ENCODE measurements at regions of chr17 and their contacts with region 1.

Region 1: DNA sequence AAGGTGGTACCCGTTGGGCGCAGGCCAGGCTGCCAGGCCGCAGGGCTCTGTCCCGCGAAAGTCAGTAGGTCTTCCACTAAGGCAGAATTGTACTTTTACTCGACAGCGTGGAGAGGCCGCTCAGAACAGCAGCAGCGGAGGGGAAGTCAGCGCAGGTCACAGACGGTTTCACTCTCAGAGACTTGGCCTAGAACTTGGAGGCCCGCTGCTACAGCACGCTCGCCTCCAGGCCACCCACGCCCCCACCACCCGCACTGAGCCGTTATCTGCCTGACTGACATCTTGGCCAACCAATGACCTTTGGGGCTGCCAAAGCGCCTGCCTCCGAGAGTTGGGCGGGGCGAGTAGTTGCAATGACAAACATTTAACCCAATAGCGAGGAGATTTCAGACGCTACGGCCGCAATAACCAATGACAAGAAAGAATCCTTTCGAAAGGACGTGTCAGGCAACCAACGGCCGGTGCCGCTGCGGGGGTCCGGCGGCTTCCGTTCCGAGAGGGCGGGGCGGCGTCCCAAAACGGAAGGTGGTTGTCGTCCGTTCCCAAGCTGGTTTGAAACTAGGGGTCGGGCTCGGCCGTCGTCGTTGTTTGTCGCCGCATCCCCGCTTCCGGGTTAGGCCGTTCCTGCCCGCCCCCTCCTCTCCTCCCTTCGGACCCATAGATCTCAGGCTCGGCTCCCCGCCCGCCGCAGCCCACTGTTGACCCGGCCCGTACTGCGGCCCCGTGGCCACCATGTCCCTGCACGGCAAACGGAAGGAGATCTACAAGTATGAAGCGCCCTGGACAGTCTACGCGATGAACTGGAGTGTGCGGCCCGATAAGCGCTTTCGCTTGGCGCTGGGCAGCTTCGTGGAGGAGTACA is at the start of gene DCAF7:
- DNase-seq: peak; percentile 93 to 99 (median 99)
- ATAC-seq: peak; percentile 97
- H3K4me3 ChIP-seq: peak within 1 kb of the TSS; percentile 93
- H3K4me3 Mint-ChIP-seq: peak within 1 kb of the TSS; percentile 85 to 99 (median 98)
- H3K27ac ChIP-seq: peak within 1 kb of the TSS; percentile 90
- H3K27ac Mint-ChIP-seq: peak within 1 kb of the TSS; percentile 94 to 97 (median 96)
- H3K4me1 ChIP-seq: peaks cover 18 to 27% of the 10 kb centered on the region in 2 donors
- H3K4me1 Mint-ChIP-seq: peaks cover 32 to 50% (median 41%) of the 10 kb centered on the region in 7 donors
- H3K27me3 ChIP-seq: no peaks in the 10 kb centered on the region
- H3K27me3 Mint-ChIP-seq: peaks cover 0 to 2% (median 0%) of the 10 kb centered on the region in 5 donors
- total RNA-seq, gene DCAF7: 26.0 to 128 (median 70.0) TPM

Region 2: GRCh38 chr17:63445979-63446691 is 104.0 kb before region 1 on chr17 and contains the start of gene CYB561:
- CTCF ChIA-PET with region 1: no interaction called
- POLR2A ChIA-PET with region 1: no interaction called
- intact Hi-C with region 1: loop called (anchors 1 to 5 kb)
- DNase-seq: peak; percentile 34 to 83 (median 54)
- ATAC-seq: peak; percentile 74
- H3K4me3 ChIP-seq: peak within 1 kb of the TSS; percentile 61
- H3K4me3 Mint-ChIP-seq: peak within 1 kb of the TSS; percentile 69 to 87 (median 79)
- H3K27ac ChIP-seq: peak within 1 kb of the TSS; percentile 67
- H3K27ac Mint-ChIP-seq: peak within 1 kb of the TSS; percentile 33 to 86 (median 72)
- H3K4me1 ChIP-seq: peaks cover 9 to 11% of the 10 kb centered on the region in 2 donors
- H3K4me1 Mint-ChIP-seq: peaks cover 11 to 37% (median 23%) of the 10 kb centered on the region in 7 donors
- H3K27me3 ChIP-seq: no peaks in the 10 kb centered on the region
- H3K27me3 Mint-ChIP-seq: peaks cover 0 to 24% (median 0%) of the 10 kb centered on the region in 5 donors
- total RNA-seq, gene CYB561: 5.0 to 20.4 (median 11.0) TPM

Region 3: GRCh38 chr17:63611354-63611753 is 61.2 kb after region 1 on chr17:
- CTCF ChIA-PET with region 1: interaction called, 4 read pairs
- POLR2A ChIA-PET with region 1: interaction called, 5 read pairs
- intact Hi-C with region 1: loop called in 1 of 2 experiments (anchors 2 kb)
- DNase-seq: peak in 5 of 9 donors; percentile 3 to 57 (median 25)
- ATAC-seq: peak; percentile 47
- H3K4me3 ChIP-seq: no peak overlapping the region
- H3K4me3 Mint-ChIP-seq: peak overlapping the region in 9 of 10 donors; percentile 10 to 74 (median 58)
- H3K27ac ChIP-seq: peak overlapping the region; percentile 52
- H3K27ac Mint-ChIP-seq: peak overlapping the region; percentile 85 to 98 (median 93)
- H3K4me1 ChIP-seq: peaks cover 25 to 28% of the 10 kb centered on the region in 2 donors
- H3K4me1 Mint-ChIP-seq: peaks cover 22 to 30% (median 29%) of the 10 kb centered on the region in 7 donors
- H3K27me3 ChIP-seq: no peaks in the 10 kb centered on the region
- H3K27me3 Mint-ChIP-seq: no peaks in the 10 kb centered on the region

Region 4: GRCh38 chr17:63773381-63774140 is 223.4 kb after region 1 on chr17 and contains the start of gene CCDC47:
- CTCF ChIA-PET with region 1: no interaction called
- POLR2A ChIA-PET with region 1: interaction called, 3 read pairs
- intact Hi-C with region 1: loop called in 1 of 2 experiments (anchors 1 kb)
- DNase-seq: peak; percentile 92 to 99 (median 99)
- ATAC-seq: peak; percentile 88
- H3K4me3 ChIP-seq: peak within 1 kb of the TSS; percentile 85
- H3K4me3 Mint-ChIP-seq: peak within 1 kb of the TSS; percentile 91 to 99 (median 98)
- H3K27ac ChIP-seq: peak within 1 kb of the TSS; percentile 100
- H3K27ac Mint-ChIP-seq: peak within 1 kb of the TSS; percentile 97 to 100 (median 99)
- H3K4me1 ChIP-seq: peaks cover 21 to 46% of the 10 kb centered on the region in 2 donors
- H3K4me1 Mint-ChIP-seq: peaks cover 31 to 84% (median 62%) of the 10 kb centered on the region in 7 donors
- H3K27me3 ChIP-seq: no peaks in the 10 kb centered on the region
- H3K27me3 Mint-ChIP-seq: peaks cover 0 to 7% (median 0%) of the 10 kb centered on the region in 5 donors
- total RNA-seq, gene CCDC47: 31.8 to 62.9 (median 34.7) TPM

Region 5: GRCh38 chr17:63848834-63849700 is 298.9 kb after region 1 on chr17:
- CTCF ChIA-PET with region 1: no interaction called
- POLR2A ChIA-PET with region 1: no interaction called
- intact Hi-C with region 1: loop called (anchors 1 kb)
- DNase-seq: peak; percentile 88 to 96 (median 94)
- ATAC-seq: peak; percentile 99
- H3K4me3 ChIP-seq: peak overlapping the region; percentile 57
- H3K4me3 Mint-ChIP-seq: peak overlapping the region; percentile 81 to 90 (median 87)
- H3K27ac ChIP-seq: peak overlapping the region; percentile 61
- H3K27ac Mint-ChIP-seq: peak overlapping the region; percentile 86 to 99 (median 93)
- H3K4me1 ChIP-seq: peaks cover 0 to 9% of the 10 kb centered on the region in 2 donors
- H3K4me1 Mint-ChIP-seq: peaks cover 11 to 27% (median 24%) of the 10 kb centered on the region in 7 donors
- H3K27me3 ChIP-seq: no peaks in the 10 kb centered on the region
- H3K27me3 Mint-ChIP-seq: peaks cover 0 to 25% (median 0%) of the 10 kb centered on the region in 5 donors

Measured in naive thymus-derived CD4-positive, alpha-beta T cell (primary cell).